GM12878 (cell line): ENCODE measurements at regions of chr14 and their contacts with region 1.

Region 1: DNA sequence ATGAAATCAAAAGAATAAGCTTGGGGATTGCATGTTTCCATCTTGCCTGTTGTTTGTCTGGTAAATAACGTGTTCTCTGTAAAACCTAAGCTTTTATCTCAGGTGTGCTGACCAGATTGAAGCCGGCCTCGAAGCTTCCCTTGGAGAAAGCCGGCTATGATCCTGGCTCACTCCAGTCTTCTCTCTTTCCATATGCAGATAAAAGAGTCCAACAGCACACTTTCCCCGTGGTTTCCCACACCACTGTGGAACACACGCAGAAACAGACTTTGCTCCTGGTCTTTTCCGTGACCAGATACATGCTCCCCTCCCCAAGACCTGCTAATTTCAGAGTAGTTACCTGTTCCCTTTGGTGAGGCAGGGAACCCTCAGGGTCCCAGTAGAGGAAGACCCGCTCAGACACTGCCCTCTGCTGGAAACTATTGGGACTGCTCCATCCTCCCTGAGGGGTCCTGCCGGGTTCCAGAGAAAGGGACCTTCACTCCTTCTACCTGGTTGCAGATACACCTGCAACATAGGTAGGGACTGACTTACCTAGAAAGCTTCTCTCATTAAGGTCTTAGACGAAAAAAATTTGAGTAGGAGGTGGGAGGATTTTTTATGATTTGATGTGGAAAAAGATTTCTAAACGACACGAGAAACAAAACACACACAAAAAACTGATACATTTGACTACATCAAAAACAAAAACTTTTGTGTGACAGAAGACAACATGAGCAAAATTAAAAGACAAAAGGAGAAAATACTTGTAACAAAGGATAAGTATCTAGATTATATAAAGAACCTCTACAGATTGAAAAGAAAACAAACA is 415.5 kb upstream of the CCDC196 start:
- DNase-seq: no peak
- ATAC-seq: peak; percentile 85
- H3K4me3 ChIP-seq: no peak overlapping the region
- H3K27ac ChIP-seq: no peak overlapping the region
- H3K4me1 ChIP-seq: no peaks in the 10 kb centered on the region
- H3K27me3 ChIP-seq: no peaks in the 10 kb centered on the region; a peak in 1 of 4 replicates
- CTCF ChIP-seq: peak; percentile 72 to 87 (median 82)
- EP300 ChIP-seq: no peak
- POLR2A ChIP-seq: no peak
- RAD21 ChIP-seq: peak; percentile 84

Region 2: DNA sequence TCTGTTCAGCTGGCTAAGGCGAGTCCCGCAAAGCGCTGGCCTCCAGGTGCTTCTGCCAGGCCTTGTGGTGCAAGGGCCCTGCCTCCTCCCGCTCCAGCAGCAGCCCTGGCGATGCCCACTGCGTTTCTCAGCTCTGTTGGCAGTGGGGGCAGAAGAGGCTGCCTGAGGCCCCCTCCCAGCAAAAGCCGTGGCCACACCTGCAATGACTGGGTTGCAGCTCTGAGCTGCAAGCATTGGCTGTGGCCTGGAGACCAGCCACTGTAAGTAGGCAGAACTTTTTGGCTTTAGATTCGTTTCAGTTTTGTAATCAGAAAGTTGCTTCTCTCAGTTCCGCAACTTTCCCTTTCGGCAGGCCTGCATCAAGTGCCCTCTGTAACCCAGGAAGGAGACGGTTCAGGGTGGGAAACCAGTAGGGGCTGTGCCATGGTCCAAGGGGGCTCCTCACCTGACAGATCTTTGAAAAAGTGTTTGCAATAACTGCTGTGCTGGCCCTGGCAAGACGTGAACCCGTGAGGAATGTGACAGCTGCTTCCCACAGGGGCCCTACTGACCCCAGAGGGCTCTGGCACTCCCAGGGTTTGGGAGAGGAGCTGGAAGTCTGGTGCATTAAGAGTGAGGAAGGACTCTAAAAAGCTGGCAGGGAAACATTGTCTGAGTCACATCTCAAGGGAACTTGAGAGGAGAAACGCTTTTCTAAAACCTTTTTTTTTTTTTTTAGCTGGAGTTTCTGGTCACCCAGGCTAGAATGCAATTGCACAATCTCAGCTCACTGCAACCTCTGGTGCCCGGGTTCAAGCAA is 913.9 kb before region 1 on chr14:
- CTCF ChIA-PET with region 1: interaction called, 3 read pairs
- POLR2A ChIA-PET with region 1: no interaction called
- RAD21 ChIA-PET with region 1: no interaction called
- SMC1A ChIA-PET with region 1: no interaction called
- in situ Hi-C with region 1: no loop called
- intact Hi-C with region 1: loop called (anchors 2 kb)
- DNase-seq: peak; percentile 45
- ATAC-seq: peak; percentile 92
- H3K4me3 ChIP-seq: peak overlapping the region; percentile 48; the same call in 1 of the 2 replicates
- H3K27ac ChIP-seq: peak overlapping the region; percentile 85
- H3K4me1 ChIP-seq: peaks cover 48% of the 10 kb centered on the region
- H3K27me3 ChIP-seq: no peaks in the 10 kb centered on the region
- CTCF ChIP-seq: no peak
- EP300 ChIP-seq: 0 out of 4 replicates have a peak, but pooled peaks of 1 of the 2 experiments have one; percentile 46
- POLR2A ChIP-seq: no peak
- RAD21 ChIP-seq: no peak

Region 3: GRCh38 chr14:65222440-65222858 is 848.3 kb before region 1 on chr14:
- CTCF ChIA-PET with region 1: no interaction called
- POLR2A ChIA-PET with region 1: no interaction called
- RAD21 ChIA-PET with region 1: no interaction called
- SMC1A ChIA-PET with region 1: no interaction called
- in situ Hi-C with region 1: no loop called
- intact Hi-C with region 1: loop called (anchors 5 kb)
- DNase-seq: no peak
- ATAC-seq: peak; percentile 86
- H3K4me3 ChIP-seq: no peak overlapping the region
- H3K27ac ChIP-seq: peak overlapping the region; percentile 20; the same call in 1 of the 2 replicates
- H3K4me1 ChIP-seq: peaks cover 31% of the 10 kb centered on the region
- H3K27me3 ChIP-seq: no peaks in the 10 kb centered on the region
- CTCF ChIP-seq: peak; percentile 84 to 91 (median 84)
- EP300 ChIP-seq: no peak
- POLR2A ChIP-seq: no peak
- RAD21 ChIP-seq: peak; percentile 95

Region 4: GRCh38 chr14:65815127-65815526 is 255.6 kb before region 1 on chr14:
- CTCF ChIA-PET with region 1: no interaction called
- POLR2A ChIA-PET with region 1: no interaction called
- RAD21 ChIA-PET with region 1: no interaction called
- SMC1A ChIA-PET with region 1: no interaction called
- in situ Hi-C with region 1: no loop called
- intact Hi-C with region 1: no loop called
- DNase-seq: no peak
- ATAC-seq: no peak
- H3K4me3 ChIP-seq: no peak overlapping the region
- H3K27ac ChIP-seq: no peak overlapping the region
- H3K4me1 ChIP-seq: no peaks in the 10 kb centered on the region
- H3K27me3 ChIP-seq: no peaks in the 10 kb centered on the region
- CTCF ChIP-seq: no peak
- EP300 ChIP-seq: no peak
- POLR2A ChIP-seq: no peak
- RAD21 ChIP-seq: no peak

Region 5: GRCh38 chr14:65958664-65959562 is 111.8 kb before region 1 on chr14:
- CTCF ChIA-PET with region 1: interaction called, 90 read pairs
- POLR2A ChIA-PET with region 1: no interaction called
- RAD21 ChIA-PET with region 1: interaction called, 9 read pairs
- SMC1A ChIA-PET with region 1: interaction called, 11 read pairs
- in situ Hi-C with region 1: no loop called
- intact Hi-C with region 1: loop called (anchors 2 kb)
- DNase-seq: no peak
- ATAC-seq: peak; percentile 82
- H3K4me3 ChIP-seq: no peak overlapping the region
- H3K27ac ChIP-seq: no peak overlapping the region
- H3K4me1 ChIP-seq: no peaks in the 10 kb centered on the region
- H3K27me3 ChIP-seq: peaks cover 2 to 4% of the 10 kb centered on the region in 2 experiments; a peak in 2 of 4 replicates
- CTCF ChIP-seq: peak; percentile 22 to 55 (median 42); a peak in 4 of 6 replicates
- EP300 ChIP-seq: no peak
- POLR2A ChIP-seq: no peak
- RAD21 ChIP-seq: peak; percentile 57

Region 6: GRCh38 chr14:66056926-66057552 is 13.7 kb before region 1 on chr14:
- CTCF ChIA-PET with region 1: interaction called, 12 read pairs
- POLR2A ChIA-PET with region 1: no interaction called
- RAD21 ChIA-PET with region 1: no interaction called
- SMC1A ChIA-PET with region 1: interaction called, 6 read pairs
- in situ Hi-C with region 1: no loop called
- intact Hi-C with region 1: no loop called
- DNase-seq: no peak
- ATAC-seq: peak; percentile 73
- H3K4me3 ChIP-seq: no peak overlapping the region
- H3K27ac ChIP-seq: no peak overlapping the region
- H3K4me1 ChIP-seq: no peaks in the 10 kb centered on the region
- H3K27me3 ChIP-seq: no peaks in the 10 kb centered on the region
- CTCF ChIP-seq: no peak
- EP300 ChIP-seq: no peak
- POLR2A ChIP-seq: no peak
- RAD21 ChIP-seq: no peak